ENCODE measurements at regions of chr7 and their contacts with region 1.

Region 1: DNA sequence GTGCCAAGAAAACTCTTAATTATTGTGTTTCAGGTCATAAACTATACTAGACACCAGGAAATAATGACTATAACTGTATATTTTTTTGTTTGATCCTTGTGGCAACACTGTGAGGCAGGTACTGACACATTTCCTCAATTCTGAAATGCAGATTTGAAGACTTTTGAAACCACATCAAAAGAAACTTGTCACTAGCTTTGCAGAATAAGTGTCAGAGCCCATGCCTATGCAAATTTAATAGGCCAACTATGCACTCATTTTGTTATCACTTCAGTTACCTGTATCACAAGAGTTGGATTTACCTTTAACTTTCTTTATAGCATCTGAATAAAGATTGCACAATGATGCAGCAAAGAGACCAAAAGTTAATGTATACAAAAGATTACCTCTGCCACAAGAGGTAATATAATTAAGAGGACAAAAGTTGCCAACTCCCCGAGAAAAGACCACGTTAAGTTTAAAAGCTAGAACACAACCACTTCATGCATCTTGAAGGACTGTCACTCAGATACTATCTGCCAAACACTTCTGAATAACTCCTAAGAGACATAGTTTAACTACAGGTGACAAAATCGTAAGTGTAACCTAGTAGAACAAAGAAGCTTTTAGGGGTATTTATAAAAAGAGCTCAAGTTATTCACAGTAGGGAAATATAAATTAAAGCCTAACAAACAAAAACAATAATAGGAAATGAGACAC is 80.5 kb downstream of the ELAPOR2 start:
- DNase-seq: peak in 7 of 9 donors; percentile 69 to 92 (median 85)
- ATAC-seq: peak; percentile 91
- H3K4me3 ChIP-seq: no peak overlapping the region
- H3K4me3 Mint-ChIP-seq: peak overlapping the region in 8 of 10 donors; percentile 23 to 65 (median 50)
- H3K27ac ChIP-seq: peak overlapping the region; percentile 63
- H3K27ac Mint-ChIP-seq: peak overlapping the region in 8 of 9 donors; percentile 71 to 97 (median 87)
- H3K4me1 ChIP-seq: peaks cover 22 to 30% of the 10 kb centered on the region in 2 donors
- H3K4me1 Mint-ChIP-seq: peaks cover 14 to 53% (median 35%) of the 10 kb centered on the region in 7 donors
- H3K27me3 ChIP-seq: no peaks in the 10 kb centered on the region
- H3K27me3 Mint-ChIP-seq: no peaks in the 10 kb centered on the region

Region 2: GRCh38 chr7:86955895-86956503 is 23.0 kb before region 1 on chr7:
- CTCF ChIA-PET with region 1: no interaction called
- POLR2A ChIA-PET with region 1: no interaction called
- intact Hi-C with region 1: loop called in 1 of 2 experiments (anchors 2 kb)
- DNase-seq: no peak
- ATAC-seq: no peak
- H3K4me3 ChIP-seq: no peak overlapping the region
- H3K4me3 Mint-ChIP-seq: no peak overlapping the region
- H3K27ac ChIP-seq: no peak overlapping the region
- H3K27ac Mint-ChIP-seq: no peak overlapping the region
- H3K4me1 ChIP-seq: no peaks in the 10 kb centered on the region
- H3K4me1 Mint-ChIP-seq: peaks cover 0 to 5% (median 0%) of the 10 kb centered on the region in 7 donors
- H3K27me3 ChIP-seq: no peaks in the 10 kb centered on the region
- H3K27me3 Mint-ChIP-seq: peaks cover 0 to 4% (median 0%) of the 10 kb centered on the region in 5 donors

Region 3: DNA sequence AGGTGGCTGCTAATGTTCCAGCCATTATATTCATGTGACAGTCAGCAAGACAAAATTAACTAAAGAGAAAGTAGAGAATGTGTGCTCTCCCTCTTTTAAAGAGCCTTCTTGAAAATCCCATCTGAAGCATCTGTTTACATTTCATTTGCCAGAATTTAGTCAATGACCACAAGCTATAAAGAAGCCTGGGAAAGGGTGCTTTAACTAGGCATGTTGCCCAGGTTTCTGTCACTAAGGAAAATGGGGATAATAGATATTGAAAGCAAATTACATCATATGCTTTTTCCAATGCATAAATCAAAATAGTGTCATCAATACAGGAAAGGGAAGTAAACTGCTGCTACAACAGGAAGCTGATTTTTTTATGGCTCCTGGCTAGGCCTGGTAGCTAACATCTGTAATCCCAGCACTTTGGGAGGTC is 12.8 kb after region 1 on chr7:
- CTCF ChIA-PET with region 1: no interaction called
- POLR2A ChIA-PET with region 1: no interaction called
- intact Hi-C with region 1: loop called in 1 of 2 experiments (anchors 2 kb)
- DNase-seq: no peak
- ATAC-seq: no peak
- H3K4me3 ChIP-seq: no peak overlapping the region
- H3K4me3 Mint-ChIP-seq: no peak overlapping the region
- H3K27ac ChIP-seq: no peak overlapping the region
- H3K27ac Mint-ChIP-seq: no peak overlapping the region
- H3K4me1 ChIP-seq: no peaks in the 10 kb centered on the region
- H3K4me1 Mint-ChIP-seq: peaks cover 0 to 10% (median 5%) of the 10 kb centered on the region in 7 donors
- H3K27me3 ChIP-seq: no peaks in the 10 kb centered on the region
- H3K27me3 Mint-ChIP-seq: peaks cover 0 to 11% (median 5%) of the 10 kb centered on the region in 5 donors

Region 4: DNA sequence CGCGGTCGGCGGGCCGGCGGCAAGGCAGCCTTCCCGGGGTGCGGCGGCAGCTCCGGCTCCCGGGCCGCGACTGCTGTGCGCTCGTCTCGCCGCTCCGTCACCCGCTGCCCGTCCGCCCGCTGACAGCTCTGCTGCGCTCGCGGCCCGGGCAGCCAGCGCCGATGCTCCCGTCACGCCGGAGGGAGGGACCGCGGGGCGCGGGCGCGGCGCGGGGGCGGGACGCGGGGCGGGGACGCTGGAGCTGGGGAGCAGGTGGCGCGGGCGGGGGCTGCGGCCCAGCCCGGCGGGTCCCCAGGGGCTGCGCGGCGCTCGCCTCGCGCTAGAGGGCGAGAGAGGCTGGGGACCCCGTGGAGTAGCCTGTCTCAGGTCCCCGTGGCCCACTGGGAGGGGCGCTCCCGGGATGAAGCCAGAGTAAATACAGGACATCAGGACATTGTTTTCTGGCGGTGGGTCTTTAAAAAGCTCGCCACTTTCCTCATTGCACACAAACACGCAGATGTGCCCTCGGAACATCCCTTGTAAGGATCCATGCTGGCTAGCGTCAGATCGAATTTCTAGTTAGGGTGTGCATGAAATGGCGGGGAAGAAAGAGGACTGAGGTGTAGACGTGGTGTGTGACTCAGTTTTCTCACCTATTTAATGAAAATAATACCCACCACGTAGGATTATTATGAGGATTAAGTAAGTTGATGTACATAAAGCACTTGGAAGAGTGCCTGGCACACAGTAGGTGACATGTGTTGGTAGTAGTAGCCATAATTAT is 80.7 kb after region 1 on chr7 and contains the start of gene ELAPOR2:
- CTCF ChIA-PET with region 1: no interaction called
- POLR2A ChIA-PET with region 1: no interaction called
- intact Hi-C with region 1: loop called in 1 of 2 experiments (anchors 1 kb)
- DNase-seq: peak; percentile 68 to 83 (median 75)
- ATAC-seq: peak; percentile 97
- H3K4me3 ChIP-seq: peak within 1 kb of the TSS; percentile 66
- H3K4me3 Mint-ChIP-seq: peak within 1 kb of the TSS; percentile 78 to 88 (median 84)
- H3K27ac ChIP-seq: peak within 1 kb of the TSS; percentile 52
- H3K27ac Mint-ChIP-seq: peak within 1 kb of the TSS in 8 of 9 donors; percentile 6 to 89 (median 70)
- H3K4me1 ChIP-seq: peaks cover 9 to 10% of the 10 kb centered on the region in 2 donors
- H3K4me1 Mint-ChIP-seq: peaks cover 7 to 18% (median 14%) of the 10 kb centered on the region in 7 donors
- H3K27me3 ChIP-seq: no peaks in the 10 kb centered on the region
- H3K27me3 Mint-ChIP-seq: peaks cover 9 to 23% (median 14%) of the 10 kb centered on the region in 5 donors
- total RNA-seq, gene ELAPOR2: 5.3 to 11.0 (median 6.4) TPM

Measured in naive thymus-derived CD4-positive, alpha-beta T cell (primary cell).